B cell (primary cell): ENCODE measurements at regions of chr1 and their contacts with region 1.

Region 1: DNA sequence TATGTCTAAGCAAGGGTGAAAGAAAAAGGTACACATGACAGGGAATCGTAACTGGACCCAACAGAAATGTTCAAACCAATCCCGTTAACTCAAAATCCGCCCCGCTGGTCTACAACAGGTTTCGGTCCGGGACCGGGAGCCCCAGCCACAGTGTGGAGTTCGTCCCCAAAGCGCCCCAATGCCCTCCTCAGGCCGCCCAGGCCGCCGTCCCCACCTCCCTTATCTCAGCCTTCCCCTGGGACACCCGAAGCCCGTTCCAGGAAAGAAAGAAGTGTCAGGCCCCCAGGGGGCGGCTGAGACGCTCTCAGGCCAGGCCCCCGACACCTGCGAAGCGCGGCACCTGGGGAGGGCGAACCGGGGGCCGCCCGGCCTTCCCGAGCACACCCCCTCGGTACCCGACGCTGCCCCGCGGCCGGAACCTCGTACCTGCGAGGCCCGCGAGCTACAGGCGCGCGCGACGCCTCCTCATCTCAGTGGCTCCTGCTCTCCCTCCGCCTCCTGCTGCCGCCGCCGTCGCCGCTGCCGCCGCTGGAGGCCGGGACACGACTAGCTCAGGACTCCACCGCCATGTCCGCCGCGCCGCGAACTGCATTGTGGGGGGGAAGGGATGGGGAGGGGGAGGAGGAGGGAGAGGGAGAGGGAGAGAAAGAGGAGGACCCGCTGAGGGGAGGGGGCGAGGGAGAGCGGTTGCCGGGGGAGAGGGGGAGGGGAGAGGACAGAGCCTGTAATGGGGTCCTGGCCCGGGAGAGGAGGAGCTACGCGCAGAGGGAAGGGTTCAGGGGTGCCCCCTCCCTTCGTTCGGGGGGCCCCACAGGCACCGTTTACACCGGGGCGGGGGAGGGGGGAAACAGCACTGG is at the start of gene TUT4:
- DNase-seq: peak; percentile 86
- ATAC-seq: peak; percentile 53
- H3K4me3 ChIP-seq: peak within 1 kb of the TSS; percentile 85 to 95 (median 92)
- H3K4me3 Mint-ChIP-seq: no peak within 1 kb of the TSS
- H3K27ac ChIP-seq: peak within 1 kb of the TSS; percentile 94
- H3K27ac Mint-ChIP-seq: peak within 1 kb of the TSS; percentile 68
- H3K4me1 ChIP-seq: peaks cover 25 to 31% of the 10 kb centered on the region in 2 donors
- H3K4me1 Mint-ChIP-seq: peaks cover 37% of the 10 kb centered on the region
- H3K27me3 ChIP-seq: no peaks in the 10 kb centered on the region
- H3K27me3 Mint-ChIP-seq: no peaks in the 10 kb centered on the region
- CTCF ChIP-seq: no peak
- total RNA-seq, gene TUT4: 248 and 265 TPM in 2 replicates

Region 2: DNA sequence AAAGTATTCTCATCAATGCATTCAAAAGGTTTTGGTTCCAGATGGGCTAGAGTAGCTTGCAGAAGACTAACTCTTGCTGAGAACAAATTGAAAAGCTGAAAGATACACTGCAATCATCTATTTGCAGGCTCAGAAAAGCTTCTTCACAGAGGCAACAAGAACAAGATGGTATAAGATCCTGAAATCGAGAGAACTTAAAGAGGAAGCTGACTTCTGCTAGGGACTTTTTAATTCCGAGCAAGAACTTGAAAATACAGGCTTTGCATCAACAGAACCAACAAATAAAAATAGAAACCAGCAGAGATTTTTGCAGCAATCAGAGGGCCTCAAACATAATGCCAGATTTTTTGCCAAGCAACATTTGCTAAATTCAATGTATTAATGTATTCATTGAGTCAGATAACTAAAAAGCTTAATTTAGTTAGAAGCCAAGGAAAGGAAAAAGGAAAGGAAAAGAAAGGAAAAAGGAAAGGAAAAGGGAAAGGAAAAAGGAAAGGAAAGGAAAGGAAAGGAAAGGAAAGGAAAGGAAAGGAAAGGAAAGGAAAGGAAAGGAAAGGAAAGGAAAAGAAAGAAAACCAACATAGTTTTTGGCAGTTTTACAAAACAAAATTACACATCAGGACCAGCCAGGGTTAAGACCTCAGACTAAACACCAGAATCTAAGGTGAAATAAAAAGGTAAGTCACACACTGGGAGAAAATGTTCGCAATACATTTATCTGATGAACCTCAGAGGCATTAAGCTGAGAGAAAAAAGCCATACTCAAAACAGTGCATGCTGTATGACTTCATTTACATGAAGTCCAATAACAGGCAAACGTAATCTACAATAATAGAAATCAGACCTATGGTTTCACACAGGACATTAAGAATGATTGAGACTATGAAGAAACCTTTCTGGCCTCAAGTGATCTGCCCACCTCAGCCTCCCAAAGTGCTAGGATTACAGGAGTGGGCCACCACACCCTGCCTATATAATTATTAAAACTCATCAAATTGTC is 1635.3 kb before region 1 on chr1:
- CTCF ChIA-PET with region 1: no interaction called
- POLR2A ChIA-PET with region 1: interaction called, 10 read pairs
- intact Hi-C with region 1: no loop called
- DNase-seq: peak; percentile 56
- ATAC-seq: peak; percentile 64
- H3K4me3 ChIP-seq: peak overlapping the region in 1 of 5 experiments; percentile 31
- H3K4me3 Mint-ChIP-seq: peak overlapping the region; percentile 74
- H3K27ac ChIP-seq: peak overlapping the region; percentile 45 to 78
- H3K27ac Mint-ChIP-seq: peak overlapping the region; percentile 92
- H3K4me1 ChIP-seq: peaks cover 18 to 20% of the 10 kb centered on the region in 2 donors
- H3K4me1 Mint-ChIP-seq: peaks cover 26% of the 10 kb centered on the region
- H3K27me3 ChIP-seq: no peaks in the 10 kb centered on the region
- H3K27me3 Mint-ChIP-seq: no peaks in the 10 kb centered on the region
- CTCF ChIP-seq: no peak

Region 3: DNA sequence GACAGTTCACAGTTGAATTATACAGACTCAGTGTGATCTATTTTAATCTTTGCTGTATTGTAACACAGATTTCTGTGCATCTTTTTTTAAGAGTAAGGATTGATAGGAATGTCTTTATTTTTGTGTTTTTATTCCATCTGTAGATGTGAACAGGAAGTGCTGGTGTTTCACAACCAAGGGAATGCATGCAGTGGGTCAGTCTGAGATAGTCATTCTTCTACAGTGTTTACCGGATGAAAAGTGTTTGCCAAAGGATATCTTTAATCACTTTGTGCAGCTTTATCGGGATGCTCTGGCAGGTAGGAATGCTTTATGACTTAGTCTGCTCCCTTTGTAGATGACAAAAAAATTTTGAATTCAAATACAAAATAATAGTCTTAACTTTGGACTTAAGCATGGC is 271.2 kb before region 1 on chr1:
- CTCF ChIA-PET with region 1: no interaction called
- POLR2A ChIA-PET with region 1: no interaction called
- intact Hi-C with region 1: no loop called
- DNase-seq: no peak
- ATAC-seq: no peak
- H3K4me3 ChIP-seq: no peak overlapping the region
- H3K4me3 Mint-ChIP-seq: no peak overlapping the region
- H3K27ac ChIP-seq: no peak overlapping the region
- H3K27ac Mint-ChIP-seq: no peak overlapping the region
- H3K4me1 ChIP-seq: no peaks in the 10 kb centered on the region
- H3K4me1 Mint-ChIP-seq: no peaks in the 10 kb centered on the region
- H3K27me3 ChIP-seq: no peaks in the 10 kb centered on the region
- H3K27me3 Mint-ChIP-seq: peaks cover 7% of the 10 kb centered on the region
- CTCF ChIP-seq: no peak

Region 4: GRCh38 chr1:52365746-52366516 is 186.8 kb before region 1 on chr1 and contains the start of gene CC2D1B:
- CTCF ChIA-PET with region 1: interaction called, 3 read pairs
- POLR2A ChIA-PET with region 1: no interaction called
- intact Hi-C with region 1: loop called (anchors 1 kb)
- DNase-seq: peak; percentile 100
- ATAC-seq: peak; percentile 92
- H3K4me3 ChIP-seq: peak within 1 kb of the TSS; percentile 73 to 88 (median 79)
- H3K4me3 Mint-ChIP-seq: peak within 1 kb of the TSS; percentile 96
- H3K27ac ChIP-seq: peak within 1 kb of the TSS; percentile 71 to 90
- H3K27ac Mint-ChIP-seq: peak within 1 kb of the TSS; percentile 93
- H3K4me1 ChIP-seq: peaks cover 18 to 20% of the 10 kb centered on the region in 2 donors
- H3K4me1 Mint-ChIP-seq: peaks cover 34% of the 10 kb centered on the region
- H3K27me3 ChIP-seq: no peaks in the 10 kb centered on the region
- H3K27me3 Mint-ChIP-seq: peaks cover 4% of the 10 kb centered on the region
- CTCF ChIP-seq: no peak
- total RNA-seq, gene CC2D1B: 79.7 and 80.4 TPM in 2 replicates

Region 5: GRCh38 chr1:52534928-52535764 is 17.6 kb before region 1 on chr1:
- CTCF ChIA-PET with region 1: interaction called, 3 read pairs
- POLR2A ChIA-PET with region 1: interaction called, 23 read pairs
- intact Hi-C with region 1: loop called (anchors 2 kb)
- DNase-seq: no peak
- ATAC-seq: no peak
- H3K4me3 ChIP-seq: no peak overlapping the region
- H3K4me3 Mint-ChIP-seq: no peak overlapping the region
- H3K27ac ChIP-seq: peak overlapping the region in 1 of 2 donors; percentile 16
- H3K27ac Mint-ChIP-seq: no peak overlapping the region
- H3K4me1 ChIP-seq: peaks cover 31 to 36% of the 10 kb centered on the region in 2 donors
- H3K4me1 Mint-ChIP-seq: peaks cover 63% of the 10 kb centered on the region
- H3K27me3 ChIP-seq: no peaks in the 10 kb centered on the region
- H3K27me3 Mint-ChIP-seq: no peaks in the 10 kb centered on the region
- CTCF ChIP-seq: no peak

Region 6: GRCh38 chr1:52601991-52602855 is 49.5 kb after region 1 on chr1 and contains the start of gene GPX7:
- CTCF ChIA-PET with region 1: interaction called, 5 read pairs
- POLR2A ChIA-PET with region 1: interaction called, 31 read pairs
- intact Hi-C with region 1: loop called (anchors 1 kb)
- DNase-seq: peak; percentile 74
- ATAC-seq: peak; percentile 72
- H3K4me3 ChIP-seq: peak within 1 kb of the TSS; percentile 60 to 70 (median 65)
- H3K4me3 Mint-ChIP-seq: peak within 1 kb of the TSS; percentile 93
- H3K27ac ChIP-seq: peak within 1 kb of the TSS; percentile 42 to 76
- H3K27ac Mint-ChIP-seq: peak within 1 kb of the TSS; percentile 93
- H3K4me1 ChIP-seq: peaks cover 34 to 46% of the 10 kb centered on the region in 2 donors
- H3K4me1 Mint-ChIP-seq: peaks cover 50% of the 10 kb centered on the region
- H3K27me3 ChIP-seq: no peaks in the 10 kb centered on the region
- H3K27me3 Mint-ChIP-seq: no peaks in the 10 kb centered on the region
- CTCF ChIP-seq: no peak
- total RNA-seq, gene GPX7: 21.4 and 23.9 TPM in 2 replicates

Region 7: DNA sequence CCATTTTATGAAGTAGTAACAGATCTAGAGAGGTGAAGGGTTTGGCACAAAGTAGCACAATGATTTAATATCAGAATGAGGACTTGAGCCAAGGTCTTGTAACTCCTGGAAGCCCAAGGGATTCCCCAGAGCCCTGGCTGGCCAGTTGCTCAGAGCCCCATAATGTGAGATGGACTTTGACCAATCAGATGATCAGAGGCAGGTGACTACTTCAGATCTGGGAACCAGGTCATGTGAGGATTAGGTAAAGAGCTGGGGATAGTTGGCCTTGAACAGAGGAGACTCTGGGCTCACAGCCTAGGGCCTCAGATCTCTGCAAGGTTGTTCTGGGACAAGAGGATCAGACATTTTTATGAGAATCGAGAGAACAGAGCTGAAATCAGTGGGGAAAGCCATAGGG is 99.2 kb after region 1 on chr1:
- CTCF ChIA-PET with region 1: no interaction called
- POLR2A ChIA-PET with region 1: interaction called, 11 read pairs
- intact Hi-C with region 1: no loop called
- DNase-seq: no peak
- ATAC-seq: no peak
- H3K4me3 ChIP-seq: no peak overlapping the region
- H3K4me3 Mint-ChIP-seq: no peak overlapping the region
- H3K27ac ChIP-seq: no peak overlapping the region
- H3K27ac Mint-ChIP-seq: peak overlapping the region; percentile 79
- H3K4me1 ChIP-seq: peaks cover 0 to under 1% of the 10 kb centered on the region in 2 donors
- H3K4me1 Mint-ChIP-seq: peaks cover 26% of the 10 kb centered on the region
- H3K27me3 ChIP-seq: no peaks in the 10 kb centered on the region
- H3K27me3 Mint-ChIP-seq: no peaks in the 10 kb centered on the region
- CTCF ChIP-seq: no peak

Region 8: DNA sequence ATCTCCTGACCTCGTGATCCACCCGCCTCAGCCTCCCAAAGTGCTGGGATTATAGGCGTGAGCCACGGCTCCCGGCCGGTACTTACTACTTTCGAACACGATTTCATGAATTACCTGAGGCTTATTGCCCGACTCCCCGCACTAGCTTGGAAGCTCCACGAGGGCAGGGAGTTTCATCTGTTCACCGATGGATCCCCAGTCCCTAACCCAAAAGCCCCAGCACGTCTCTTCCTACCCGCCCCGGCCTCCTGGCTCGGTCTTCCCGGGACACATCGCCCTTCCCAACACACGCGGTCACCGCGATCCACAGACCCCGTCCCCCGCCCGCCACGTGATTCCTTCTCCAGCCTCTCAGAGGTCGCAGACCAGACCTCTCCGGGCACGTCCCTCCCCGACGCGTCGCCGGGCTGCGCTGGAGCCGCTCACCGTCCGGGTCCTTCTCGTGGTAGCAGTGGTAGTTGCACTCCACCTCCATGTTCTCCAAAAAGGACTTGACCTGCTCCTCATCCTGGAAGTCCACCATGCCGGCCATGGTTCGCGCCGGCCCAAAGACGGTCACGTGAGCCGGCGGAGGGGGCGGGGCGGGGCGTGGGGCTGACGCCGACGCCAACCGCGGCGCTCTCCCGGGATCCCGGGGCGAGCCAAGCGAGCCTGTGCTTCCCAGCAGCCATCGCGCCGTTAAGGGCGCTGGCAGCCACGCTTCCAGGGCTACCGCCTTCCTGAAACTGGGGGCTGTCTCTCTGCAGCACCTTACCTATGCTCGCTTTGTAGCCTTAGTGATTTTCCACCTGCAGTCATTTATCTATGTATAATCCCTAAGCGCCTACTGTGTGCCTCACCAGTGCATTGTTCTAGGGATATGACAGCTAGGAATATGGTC is 145.3 kb after region 1 on chr1 and contains the start of gene COA7:
- CTCF ChIA-PET with region 1: interaction called, 3 read pairs
- POLR2A ChIA-PET with region 1: no interaction called
- intact Hi-C with region 1: loop called (anchors 2 kb)
- DNase-seq: peak; percentile 79
- ATAC-seq: peak; percentile 35
- H3K4me3 ChIP-seq: peak within 1 kb of the TSS; percentile 53 to 89 (median 76)
- H3K4me3 Mint-ChIP-seq: peak within 1 kb of the TSS; percentile 97
- H3K27ac ChIP-seq: peak within 1 kb of the TSS; percentile 62 to 65
- H3K27ac Mint-ChIP-seq: peak within 1 kb of the TSS; percentile 87
- H3K4me1 ChIP-seq: peaks cover 4 to 22% of the 10 kb centered on the region in 2 donors
- H3K4me1 Mint-ChIP-seq: peaks cover 35% of the 10 kb centered on the region
- H3K27me3 ChIP-seq: no peaks in the 10 kb centered on the region
- H3K27me3 Mint-ChIP-seq: no peaks in the 10 kb centered on the region
- CTCF ChIP-seq: no peak
- total RNA-seq, gene COA7: 9.3 and 11.3 TPM in 2 replicates

Region 9: GRCh38 chr1:52996653-52997052 is 443.9 kb after region 1 on chr1:
- CTCF ChIA-PET with region 1: no interaction called
- POLR2A ChIA-PET with region 1: no interaction called
- intact Hi-C with region 1: no loop called
- DNase-seq: no peak
- ATAC-seq: no peak
- H3K4me3 ChIP-seq: no peak overlapping the region
- H3K4me3 Mint-ChIP-seq: no peak overlapping the region
- H3K27ac ChIP-seq: no peak overlapping the region
- H3K27ac Mint-ChIP-seq: no peak overlapping the region
- H3K4me1 ChIP-seq: no peaks in the 10 kb centered on the region
- H3K4me1 Mint-ChIP-seq: no peaks in the 10 kb centered on the region
- H3K27me3 ChIP-seq: no peaks in the 10 kb centered on the region
- H3K27me3 Mint-ChIP-seq: no peaks in the 10 kb centered on the region
- CTCF ChIP-seq: no peak